ENCODE measurements at regions of chr11 and their contacts with region 1.

Region 1: DNA sequence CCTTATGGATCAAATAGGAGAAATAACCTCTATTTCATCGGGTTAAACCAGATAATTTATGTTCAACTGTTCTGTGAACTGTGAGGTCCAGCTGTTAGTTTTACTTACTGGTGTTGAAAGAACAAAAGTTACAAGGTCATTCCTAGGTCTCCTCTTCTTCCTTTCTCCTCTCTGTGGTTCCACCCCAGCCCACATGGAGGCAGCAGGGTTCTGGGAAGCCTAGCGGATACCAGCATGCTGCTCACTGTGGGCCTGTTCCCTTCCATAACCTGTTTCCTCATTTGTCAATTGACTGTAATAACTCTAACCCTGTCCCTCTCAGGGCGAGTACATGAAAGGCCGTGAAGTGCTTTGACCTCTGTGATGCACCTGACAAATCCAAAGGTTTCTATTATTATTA is 27.8 kb downstream of the RELT start:
- DNase-seq: peak; percentile 54 to 82
- H3K4me3 ChIP-seq: no peak overlapping the region
- H3K27ac ChIP-seq: no peak overlapping the region
- H3K4me1 ChIP-seq: peaks cover 0 to 12% (median 0%) of the 10 kb centered on the region in 4 donors
- H3K27me3 ChIP-seq: no peaks in the 10 kb centered on the region
- CTCF ChIP-seq: peak in 4 of 7 experiments; percentile 30 to 56 (median 44)
- EP300 ChIP-seq: no peak
- POLR2A ChIP-seq: no peak

Region 2: GRCh38 chr11:73478738-73479347 is 74.8 kb after region 1 on chr11:
- intact Hi-C with region 1: no loop called
- DNase-seq: peak in 1 of 2 donors; percentile 36
- H3K4me3 ChIP-seq: no peak overlapping the region
- H3K27ac ChIP-seq: no peak overlapping the region
- H3K4me1 ChIP-seq: no peaks in the 10 kb centered on the region
- H3K27me3 ChIP-seq: no peaks in the 10 kb centered on the region
- CTCF ChIP-seq: peak in 4 of 7 experiments; percentile 46 to 57 (median 56)
- EP300 ChIP-seq: no peak
- POLR2A ChIP-seq: no peak

Region 3: GRCh38 chr11:73659912-73660311 is 255.9 kb after region 1 on chr11:
- intact Hi-C with region 1: loop called (anchors 5 kb)
- DNase-seq: peak in 1 of 2 donors; percentile 78
- H3K4me3 ChIP-seq: no peak overlapping the region
- H3K27ac ChIP-seq: no peak overlapping the region
- H3K4me1 ChIP-seq: peaks cover 12 to 24% (median 17%) of the 10 kb centered on the region in 4 donors
- H3K27me3 ChIP-seq: no peaks in the 10 kb centered on the region
- CTCF ChIP-seq: no peak
- EP300 ChIP-seq: no peak
- POLR2A ChIP-seq: no peak

Measured in stomach (tissue), 19 donors.